ENCODE measurements at regions of chr7 and their contacts with region 1.

Region 1: GRCh38 chr7:120950539-120951308 is at the start of gene ING3:
- DNase-seq: peak; percentile 99
- H3K4me3 ChIP-seq: peak within 1 kb of the TSS; percentile 64 to 73 (median 68)
- H3K27ac ChIP-seq: peak within 1 kb of the TSS; percentile 94 to 96 (median 96)
- H3K4me1 ChIP-seq: peaks cover 0 to 34% (median 10%) of the 10 kb centered on the region in 4 donors
- H3K27me3 ChIP-seq: no peaks in the 10 kb centered on the region
- CTCF ChIP-seq: no peak
- EP300 ChIP-seq: peak in 1 of 4 donors; percentile 56
- POLR2A ChIP-seq: no peak
- total RNA-seq, gene ING3: 16.6 to 33.1 (median 25.4) TPM

Region 2: DNA sequence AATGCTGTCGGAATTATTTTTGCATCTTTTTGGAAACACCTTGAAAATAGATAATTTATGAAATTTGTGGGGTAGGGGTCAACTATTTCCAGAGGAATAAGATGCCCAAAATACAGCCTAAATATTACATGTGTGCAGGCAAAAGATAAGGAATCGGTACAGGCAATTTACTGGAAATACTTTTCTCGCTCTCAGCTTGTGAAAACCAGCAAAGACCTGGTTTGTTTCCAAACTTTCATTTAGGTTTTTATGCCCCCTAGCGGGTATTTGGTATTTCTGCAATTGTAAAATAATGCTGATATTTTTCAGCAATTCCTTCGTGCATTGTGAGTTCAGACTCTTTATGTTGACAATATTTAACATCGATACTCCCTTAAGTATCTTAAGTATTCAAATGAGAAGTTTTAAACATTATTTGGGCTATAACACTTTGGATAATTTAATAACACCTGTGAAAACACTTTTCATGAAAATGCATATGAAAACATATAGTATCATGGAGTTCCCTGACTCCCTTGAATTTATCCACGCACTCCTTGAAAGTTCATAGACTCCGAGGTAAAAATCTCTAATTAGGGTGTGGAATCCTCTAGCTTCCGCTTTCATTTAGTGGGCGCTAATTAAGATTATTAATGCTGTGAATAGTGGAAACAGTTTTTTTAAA is 225.2 kb before region 1 on chr7:
- intact Hi-C with region 1: loop called (anchors 5 kb)
- DNase-seq: no peak
- H3K4me3 ChIP-seq: no peak overlapping the region
- H3K27ac ChIP-seq: no peak overlapping the region
- H3K4me1 ChIP-seq: peaks cover 0 to 29% (median 9%) of the 10 kb centered on the region in 4 donors
- H3K27me3 ChIP-seq: no peaks in the 10 kb centered on the region
- CTCF ChIP-seq: peak in 3 of 4 experiments; percentile 29 to 51 (median 35)
- EP300 ChIP-seq: no peak
- POLR2A ChIP-seq: no peak

Measured in sigmoid colon (tissue), 7 donors.